AG04450 (cell line): ENCODE measurements at regions of chr3 and their contacts with region 1.

Region 1: DNA sequence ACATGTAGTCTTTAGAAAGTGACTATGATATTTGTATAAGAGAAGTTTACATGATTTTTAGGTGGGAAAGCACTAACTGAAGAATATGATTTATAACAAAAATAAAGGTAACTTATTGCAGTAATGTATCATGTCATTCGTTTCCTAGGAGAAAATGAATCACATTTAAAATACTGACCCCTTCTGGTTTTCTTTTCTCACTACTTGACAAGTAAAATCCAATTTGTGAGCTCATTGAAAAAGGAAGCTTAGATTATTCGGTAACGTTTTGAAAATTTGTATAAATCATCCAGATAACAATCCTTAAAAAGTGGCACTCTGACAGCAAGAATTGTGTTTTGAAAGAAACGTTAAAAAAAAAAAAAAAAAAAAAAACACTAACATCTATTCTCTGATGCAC is 39.0 kb downstream of the NSUN3 start:
- DNase-seq: no peak
- H3K4me3 ChIP-seq: no peak overlapping the region
- H3K27ac ChIP-seq: no peak overlapping the region
- H3K27me3 ChIP-seq: no peaks in the 10 kb centered on the region
- CTCF ChIP-seq: peak; percentile 35

Region 2: DNA sequence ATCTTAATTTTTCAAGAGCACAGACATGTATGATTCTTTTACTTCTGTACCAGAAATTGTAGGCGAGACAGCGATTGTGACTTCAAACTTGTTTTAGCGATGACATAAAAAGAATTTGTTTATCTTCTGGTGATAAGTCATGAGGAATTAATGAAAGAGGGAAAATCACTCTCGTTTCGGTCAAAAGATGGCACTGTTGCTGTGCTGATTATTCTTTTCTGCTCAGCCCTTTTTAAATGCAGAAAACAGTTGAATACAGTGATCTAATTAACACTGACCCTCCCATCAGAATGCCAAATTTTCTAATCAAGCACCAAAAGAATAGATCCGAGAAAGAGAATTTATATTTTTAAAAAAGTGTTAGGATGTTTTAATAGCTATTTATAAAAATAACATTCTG is 13.6 kb after region 1 on chr3:
- CTCF ChIA-PET with region 1: interaction called, 16 read pairs
- POLR2A ChIA-PET with region 1: no interaction called
- DNase-seq: peak; percentile 7
- H3K4me3 ChIP-seq: no peak overlapping the region
- H3K27ac ChIP-seq: no peak overlapping the region
- H3K27me3 ChIP-seq: no peaks in the 10 kb centered on the region
- CTCF ChIP-seq: peak; percentile 41

Region 3: GRCh38 chr3:94269763-94270162 is 167.9 kb after region 1 on chr3:
- CTCF ChIA-PET with region 1: no interaction called
- POLR2A ChIA-PET with region 1: no interaction called
- DNase-seq: no peak
- H3K4me3 ChIP-seq: no peak overlapping the region
- H3K27ac ChIP-seq: no peak overlapping the region
- H3K27me3 ChIP-seq: no peaks in the 10 kb centered on the region
- CTCF ChIP-seq: no peak